ENCODE measurements at regions of chr1 and their contacts with region 1.

Region 1: DNA sequence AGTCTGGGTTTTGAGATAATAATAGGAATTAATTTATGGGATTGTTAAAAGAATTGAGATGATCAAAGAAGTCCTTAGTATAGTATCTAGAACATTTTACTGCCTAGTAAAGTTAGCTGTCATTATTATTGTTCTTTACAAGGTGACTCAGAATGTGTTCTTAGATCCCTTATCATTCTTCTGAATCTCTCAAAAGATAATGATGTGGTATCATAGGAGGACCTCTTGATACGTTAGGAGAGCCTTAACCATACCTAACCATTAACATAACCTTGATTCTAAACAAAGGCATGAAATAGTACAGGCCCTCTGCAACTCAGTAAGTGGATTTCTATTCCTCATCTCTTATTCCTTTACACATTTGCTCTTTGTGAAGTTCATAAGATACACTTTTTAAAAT is 246.6 kb upstream of the CACYBP start:
- DNase-seq: no peak
- ATAC-seq: no peak
- H3K4me3 ChIP-seq: no peak overlapping the region
- H3K27ac ChIP-seq: no peak overlapping the region
- H3K4me1 ChIP-seq: peaks cover 0 to 15% (median 0%) of the 10 kb centered on the region in 12 donors
- H3K27me3 ChIP-seq: no peaks in the 10 kb centered on the region
- CTCF ChIP-seq: no peak
- POLR2A ChIP-seq: no peak

Region 2: DNA sequence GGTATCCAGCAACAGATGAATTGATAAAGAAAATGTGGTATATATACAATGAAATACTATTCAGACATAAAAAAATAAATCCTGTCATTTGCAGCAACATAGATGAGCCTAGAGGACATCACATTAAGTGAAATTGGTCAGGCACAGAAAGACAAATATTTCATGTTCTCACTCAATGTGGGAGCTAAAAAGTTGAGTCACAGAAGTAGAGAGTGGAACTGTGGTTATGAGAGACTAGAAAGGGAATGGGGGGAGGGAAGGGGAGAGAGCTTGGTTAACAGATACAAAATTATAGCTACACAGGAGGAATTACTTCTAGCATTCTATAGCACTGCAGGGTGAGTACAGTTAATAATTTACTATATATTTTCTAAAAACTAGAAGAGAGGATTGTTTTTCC is 799.0 kb before region 1 on chr1:
- intact Hi-C with region 1: loop called in 1 of 10 experiments (anchors 5 kb)
- DNase-seq: no peak
- ATAC-seq: no peak
- H3K4me3 ChIP-seq: no peak overlapping the region
- H3K27ac ChIP-seq: no peak overlapping the region
- H3K4me1 ChIP-seq: no peaks in the 10 kb centered on the region
- H3K27me3 ChIP-seq: no peaks in the 10 kb centered on the region
- CTCF ChIP-seq: no peak
- POLR2A ChIP-seq: no peak

Region 3: DNA sequence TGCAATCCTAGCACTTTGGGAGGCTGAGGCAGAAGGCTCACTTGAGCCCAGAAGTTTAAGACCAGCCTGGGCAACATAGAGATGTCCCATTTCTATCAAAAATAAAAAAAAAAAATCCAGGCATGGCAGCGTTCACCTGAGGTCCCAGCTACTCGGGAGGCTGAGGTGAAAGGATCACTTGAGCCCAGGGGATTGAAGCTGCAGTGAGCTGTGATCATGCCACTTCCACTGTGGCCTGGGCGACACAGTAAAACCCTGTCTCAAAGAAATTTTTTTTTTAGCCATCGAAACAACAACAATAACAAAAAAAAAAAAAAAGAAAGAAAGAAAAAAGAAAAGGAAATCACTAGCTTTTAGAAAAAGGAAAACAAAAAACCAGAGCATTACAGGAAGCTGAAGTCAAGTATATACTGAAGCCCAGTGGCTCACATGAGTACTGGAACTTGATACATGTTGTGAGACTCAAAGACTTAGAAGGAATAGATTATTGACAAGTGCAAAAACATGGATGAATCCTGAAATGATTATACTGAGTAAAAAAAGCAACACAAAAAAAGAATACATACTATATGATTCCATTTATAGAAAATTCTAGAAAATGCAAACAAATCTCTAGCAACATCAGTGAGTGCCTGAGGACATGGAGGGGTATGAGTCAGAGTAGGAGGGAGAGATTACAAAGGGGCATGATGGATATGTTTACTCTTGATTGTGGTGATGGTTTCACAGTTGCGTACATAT is 599.9 kb before region 1 on chr1:
- intact Hi-C with region 1: no loop called
- DNase-seq: no peak
- ATAC-seq: no peak
- H3K4me3 ChIP-seq: no peak overlapping the region
- H3K27ac ChIP-seq: peak overlapping the region in 1 of 12 donors; percentile 37
- H3K4me1 ChIP-seq: peaks cover 0 to 12% (median 0%) of the 10 kb centered on the region in 12 donors
- H3K27me3 ChIP-seq: no peaks in the 10 kb centered on the region
- CTCF ChIP-seq: no peak
- POLR2A ChIP-seq: no peak

Measured in heart left ventricle (tissue), 16 donors.